ENCODE measurements at regions of chr17 and their contacts with region 1.

Region 1: GRCh38 chr17:34892461-34893249 is 68.6 kb downstream of the CCT6B start:
- DNase-seq: no peak
- ATAC-seq: peak; percentile 76
- H3K4me3 ChIP-seq: no peak overlapping the region
- H3K27ac ChIP-seq: no peak overlapping the region
- H3K4me1 ChIP-seq: no peaks in the 10 kb centered on the region
- H3K27me3 ChIP-seq: peaks cover 0 to 6% of the 10 kb centered on the region in 2 experiments; a peak in 2 of 5 replicates
- CTCF ChIP-seq: peak; percentile 68
- EP300 ChIP-seq: no peak
- POLR2A ChIP-seq: no peak
- RAD21 ChIP-seq: peak; percentile 46; the same call in 1 of the 2 replicates

Region 2: DNA sequence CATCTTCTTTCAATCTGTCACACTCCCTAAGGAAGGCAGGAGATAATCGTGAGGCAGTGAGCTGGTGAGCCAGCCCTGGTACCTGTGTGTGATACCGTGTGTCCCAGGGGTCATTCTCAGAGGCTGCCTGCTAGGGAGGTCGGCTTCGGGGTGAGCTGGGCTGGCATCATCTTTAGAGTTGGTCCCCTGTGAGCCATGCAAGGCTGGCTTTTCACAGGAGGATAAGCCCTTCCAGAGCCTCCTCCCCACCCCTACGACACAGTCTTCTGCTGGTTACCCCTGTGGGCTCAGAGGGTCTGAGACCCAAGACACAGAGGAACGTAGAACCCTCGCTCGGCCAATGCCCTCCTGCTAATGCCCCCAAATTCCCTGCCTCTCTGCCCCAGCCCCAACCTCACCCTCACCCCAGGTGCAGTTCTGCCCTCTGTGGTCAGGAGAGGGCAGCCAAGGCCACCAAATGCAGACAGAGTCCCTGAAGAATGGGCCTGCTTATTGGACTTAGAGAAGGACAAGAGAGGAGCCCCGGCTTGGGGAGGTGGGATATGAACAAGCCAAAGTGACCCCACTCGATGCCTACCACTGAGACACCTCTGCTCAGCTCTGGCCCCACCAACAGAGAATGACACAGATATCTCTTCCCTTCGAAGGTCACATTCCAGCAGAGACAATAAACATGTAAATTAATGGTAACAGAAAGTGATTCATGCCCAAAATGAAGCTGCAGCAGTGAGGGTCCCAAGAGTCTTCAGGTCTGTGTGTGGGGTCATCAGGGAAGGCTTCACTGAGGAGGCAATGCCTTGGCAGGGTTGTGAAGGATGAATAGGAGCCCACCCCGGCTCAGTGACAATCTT is 448.8 kb before region 1 on chr17:
- CTCF ChIA-PET with region 1: no interaction called
- POLR2A ChIA-PET with region 1: no interaction called
- in situ Hi-C with region 1: loop called (anchors 25 kb)
- intact Hi-C with region 1: no loop called
- DNase-seq: peak; percentile 9
- ATAC-seq: peak; percentile 78
- H3K4me3 ChIP-seq: no peak overlapping the region
- H3K27ac ChIP-seq: no peak overlapping the region
- H3K4me1 ChIP-seq: no peaks in the 10 kb centered on the region
- H3K27me3 ChIP-seq: peaks cover 0 to 1% of the 10 kb centered on the region in 2 experiments; a peak in 1 of 5 replicates
- CTCF ChIP-seq: peak; percentile 71
- EP300 ChIP-seq: no peak
- POLR2A ChIP-seq: no peak
- RAD21 ChIP-seq: no peak

Measured in HepG2 (cell line).